GM10248 (cell line): ENCODE measurements at regions of chr12 and their contacts with region 1.

Region 1: GRCh38 chr12:124036674-124037109 is 63.7 kb downstream of the ZNF664 start:
- DNase-seq: peak; percentile 74
- CTCF ChIP-seq: peak; percentile 84

Region 2: DNA sequence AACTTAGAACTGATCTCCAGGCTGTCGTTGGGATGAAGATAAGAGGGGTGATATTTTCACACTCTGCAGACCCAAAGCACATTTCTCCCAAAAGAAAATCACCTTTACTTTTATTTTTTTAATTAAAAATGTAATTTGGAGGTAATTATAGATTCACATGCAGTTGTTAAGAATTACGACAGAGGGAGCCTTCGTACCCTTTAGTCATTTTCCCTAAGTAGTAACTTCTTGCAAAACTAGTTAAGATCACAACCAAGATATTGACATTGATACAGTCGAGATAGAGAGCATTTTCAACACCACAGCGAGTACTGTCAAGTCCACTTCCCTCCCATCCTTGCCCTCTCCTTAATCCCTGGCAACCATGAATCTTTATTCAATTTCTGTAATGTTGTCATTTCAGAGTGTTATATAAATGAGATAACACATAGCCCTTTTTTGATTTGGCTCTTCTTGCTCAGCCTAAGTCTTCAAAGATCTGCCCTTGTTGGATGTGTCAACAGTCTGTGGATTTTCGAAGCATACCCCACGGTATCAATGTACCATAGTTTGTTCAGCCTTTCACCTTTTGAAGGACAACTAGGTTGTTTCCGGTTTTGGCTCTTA is 235.0 kb before region 1 on chr12:
- CTCF ChIA-PET with region 1: interaction called, 14 read pairs
- POLR2A ChIA-PET with region 1: no interaction called
- DNase-seq: peak; percentile 38
- CTCF ChIP-seq: peak; percentile 49

Region 3: GRCh38 chr12:123905319-123905925 is 131.3 kb before region 1 on chr12:
- CTCF ChIA-PET with region 1: interaction called, 11 read pairs
- POLR2A ChIA-PET with region 1: no interaction called
- DNase-seq: peak; percentile 73
- CTCF ChIP-seq: peak; percentile 67

Region 4: GRCh38 chr12:124006085-124006845 is 30.4 kb before region 1 on chr12:
- CTCF ChIA-PET with region 1: interaction called, 20 read pairs
- POLR2A ChIA-PET with region 1: interaction called, 4 read pairs
- DNase-seq: peak; percentile 66
- CTCF ChIP-seq: no peak

Region 5: GRCh38 chr12:124020514-124020949 is 16.2 kb before region 1 on chr12:
- CTCF ChIA-PET with region 1: interaction called, 15 read pairs
- POLR2A ChIA-PET with region 1: no interaction called
- DNase-seq: no peak
- CTCF ChIP-seq: no peak

Region 6: GRCh38 chr12:124321040-124321481 is 284.4 kb after region 1 on chr12:
- CTCF ChIA-PET with region 1: interaction called, 18 read pairs
- POLR2A ChIA-PET with region 1: no interaction called
- DNase-seq: peak; percentile 85
- CTCF ChIP-seq: peak; percentile 96

Region 7: GRCh38 chr12:124767066-124767821 is 730.6 kb after region 1 on chr12:
- CTCF ChIA-PET with region 1: interaction called, 29 read pairs
- POLR2A ChIA-PET with region 1: no interaction called
- DNase-seq: peak; percentile 90
- CTCF ChIP-seq: peak; percentile 98